GM12878 (cell line): ENCODE measurements at regions of chr2 and their contacts with region 1.

Region 1: GRCh38 chr2:146898083-146898482 is 946.7 kb upstream of the ACVR2A start:
- DNase-seq: no peak
- ATAC-seq: peak; percentile 71
- H3K4me3 ChIP-seq: no peak overlapping the region
- H3K27ac ChIP-seq: no peak overlapping the region
- H3K4me1 ChIP-seq: no peaks in the 10 kb centered on the region
- H3K27me3 ChIP-seq: peaks cover 0 to 2% of the 10 kb centered on the region in 2 experiments; a peak in 1 of 4 replicates
- CTCF ChIP-seq: no peak
- EP300 ChIP-seq: no peak
- POLR2A ChIP-seq: no peak
- RAD21 ChIP-seq: no peak

Region 2: DNA sequence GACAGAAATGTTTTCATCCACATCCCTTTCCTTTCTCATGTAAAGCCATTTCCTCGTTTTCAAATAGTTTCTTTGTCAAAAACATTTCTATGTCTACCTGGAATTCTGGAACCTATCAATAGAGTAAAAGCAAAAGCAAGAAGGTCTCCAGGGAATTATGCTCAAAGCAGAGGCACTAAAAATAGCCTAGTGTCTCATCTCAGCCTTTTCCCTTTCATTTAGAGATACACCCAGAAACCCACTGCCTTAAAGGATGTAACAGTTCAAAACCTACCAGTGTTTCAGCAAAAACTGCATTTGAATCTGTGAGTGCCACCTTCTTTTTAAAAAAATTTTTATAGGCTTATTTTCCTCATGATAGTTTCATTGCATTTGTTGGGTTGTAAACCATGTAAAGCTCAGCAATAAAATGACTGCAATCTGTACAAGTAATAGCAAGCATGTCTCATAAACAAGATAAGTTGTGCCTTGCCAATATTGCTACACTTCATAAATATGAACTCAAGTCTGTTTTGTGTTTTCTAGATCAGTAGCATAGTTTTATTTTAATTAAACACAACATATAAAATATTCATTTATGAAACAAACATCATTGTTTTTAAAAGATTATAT is 19.5 kb after region 1 on chr2:
- CTCF ChIA-PET with region 1: interaction called, 3 read pairs
- POLR2A ChIA-PET with region 1: interaction called, 4 read pairs
- RAD21 ChIA-PET with region 1: interaction called, 5 read pairs
- SMC1A ChIA-PET with region 1: interaction called, 12 read pairs
- in situ Hi-C with region 1: no loop called
- intact Hi-C with region 1: no loop called
- DNase-seq: no peak
- ATAC-seq: peak; percentile 64
- H3K4me3 ChIP-seq: no peak overlapping the region
- H3K27ac ChIP-seq: no peak overlapping the region
- H3K4me1 ChIP-seq: no peaks in the 10 kb centered on the region
- H3K27me3 ChIP-seq: no peaks in the 10 kb centered on the region
- CTCF ChIP-seq: no peak
- EP300 ChIP-seq: no peak
- POLR2A ChIP-seq: no peak
- RAD21 ChIP-seq: no peak

Region 3: DNA sequence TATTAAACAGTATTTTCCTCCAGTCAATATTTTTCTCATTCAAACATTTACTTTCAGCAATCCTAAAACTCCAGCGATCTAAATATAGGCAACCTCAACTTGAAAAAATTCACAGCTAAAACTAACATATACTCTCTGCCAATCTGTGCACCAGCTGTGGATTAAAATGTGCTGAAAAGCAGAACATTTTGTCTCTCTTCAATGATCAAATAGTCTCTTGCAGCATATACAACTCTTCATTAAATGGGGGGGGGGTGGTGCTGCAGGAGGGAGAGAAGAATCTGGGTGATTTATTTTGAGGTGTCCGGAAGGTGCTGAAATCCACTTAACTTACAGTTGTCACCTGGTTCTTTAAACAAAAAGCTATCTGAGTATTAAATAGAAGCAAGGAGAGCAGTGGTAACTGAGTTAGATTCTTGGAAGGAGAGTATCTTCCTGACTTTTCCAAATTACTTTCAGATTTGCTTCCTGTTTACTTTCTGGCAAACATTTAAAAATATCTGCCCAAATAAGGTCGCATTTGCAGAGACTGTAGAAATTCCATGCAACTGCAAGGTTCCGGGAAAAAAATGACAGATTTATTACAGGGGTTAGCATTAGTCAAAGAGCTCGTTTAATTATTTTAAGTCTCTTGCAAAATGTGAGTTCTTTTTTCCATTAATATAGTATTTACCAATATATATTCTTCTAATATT is 42.1 kb after region 1 on chr2:
- CTCF ChIA-PET with region 1: no interaction called
- POLR2A ChIA-PET with region 1: no interaction called
- RAD21 ChIA-PET with region 1: no interaction called
- SMC1A ChIA-PET with region 1: no interaction called
- in situ Hi-C with region 1: no loop called
- intact Hi-C with region 1: no loop called
- DNase-seq: no peak
- ATAC-seq: no peak
- H3K4me3 ChIP-seq: no peak overlapping the region
- H3K27ac ChIP-seq: no peak overlapping the region
- H3K4me1 ChIP-seq: no peaks in the 10 kb centered on the region
- H3K27me3 ChIP-seq: no peaks in the 10 kb centered on the region
- CTCF ChIP-seq: no peak
- EP300 ChIP-seq: no peak
- POLR2A ChIP-seq: no peak
- RAD21 ChIP-seq: no peak